MCF 10A (cell line): ENCODE measurements at regions of chr11 and their contacts with region 1.

Region 1: DNA sequence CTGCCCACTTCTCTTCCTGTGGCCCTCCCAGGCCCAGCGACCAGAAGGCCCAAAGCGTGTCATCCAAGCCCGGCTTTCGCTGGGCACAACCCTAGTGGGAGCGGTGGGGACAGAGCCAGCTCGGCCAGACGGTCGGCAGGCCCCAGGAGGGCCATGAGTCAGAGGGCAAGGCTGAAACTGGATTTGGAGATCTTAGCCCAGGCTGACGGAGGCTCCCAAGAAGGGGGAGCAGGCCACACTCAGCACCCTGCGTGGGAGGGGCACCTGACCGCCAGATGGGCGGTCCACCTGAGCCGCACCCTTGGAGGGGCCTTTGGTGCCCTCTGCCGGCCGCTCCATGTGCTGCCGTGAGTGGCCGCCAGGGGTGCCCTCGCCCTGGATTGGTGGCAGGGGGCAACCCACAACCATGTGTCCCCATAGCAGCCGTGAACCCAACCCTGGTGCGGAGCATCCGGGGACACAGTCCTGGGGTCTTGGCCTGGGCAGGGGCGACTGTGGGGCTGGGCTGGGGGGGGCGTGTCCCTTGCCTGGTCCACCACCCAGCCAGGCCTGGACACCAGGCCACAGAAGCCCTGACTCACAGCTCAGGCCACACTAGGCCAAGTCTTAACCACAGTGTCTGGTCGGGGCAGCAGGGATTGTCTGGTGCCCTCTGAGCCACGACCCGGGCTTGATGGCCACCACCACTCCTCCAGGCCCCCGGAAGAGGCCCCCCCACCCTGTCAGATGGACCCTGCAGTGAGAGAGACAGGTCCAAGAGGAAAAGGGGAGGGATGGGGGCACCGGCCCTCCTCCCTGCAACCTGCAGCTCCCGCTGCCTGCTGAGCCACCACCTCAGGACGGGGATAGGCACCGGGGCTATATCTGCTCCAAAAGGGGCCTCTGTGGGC is 19.2 kb upstream of the TALDO1 start:
- DNase-seq: peak; percentile 98
- H3K4me3 Mint-ChIP-seq: peak overlapping the region; percentile 23
- H3K27ac Mint-ChIP-seq: peak overlapping the region; percentile 43
- H3K4me1 Mint-ChIP-seq: peaks cover 12% of the 10 kb centered on the region
- H3K27me3 Mint-ChIP-seq: no peaks in the 10 kb centered on the region
- CTCF ChIP-seq: peak; percentile 98

Region 2: DNA sequence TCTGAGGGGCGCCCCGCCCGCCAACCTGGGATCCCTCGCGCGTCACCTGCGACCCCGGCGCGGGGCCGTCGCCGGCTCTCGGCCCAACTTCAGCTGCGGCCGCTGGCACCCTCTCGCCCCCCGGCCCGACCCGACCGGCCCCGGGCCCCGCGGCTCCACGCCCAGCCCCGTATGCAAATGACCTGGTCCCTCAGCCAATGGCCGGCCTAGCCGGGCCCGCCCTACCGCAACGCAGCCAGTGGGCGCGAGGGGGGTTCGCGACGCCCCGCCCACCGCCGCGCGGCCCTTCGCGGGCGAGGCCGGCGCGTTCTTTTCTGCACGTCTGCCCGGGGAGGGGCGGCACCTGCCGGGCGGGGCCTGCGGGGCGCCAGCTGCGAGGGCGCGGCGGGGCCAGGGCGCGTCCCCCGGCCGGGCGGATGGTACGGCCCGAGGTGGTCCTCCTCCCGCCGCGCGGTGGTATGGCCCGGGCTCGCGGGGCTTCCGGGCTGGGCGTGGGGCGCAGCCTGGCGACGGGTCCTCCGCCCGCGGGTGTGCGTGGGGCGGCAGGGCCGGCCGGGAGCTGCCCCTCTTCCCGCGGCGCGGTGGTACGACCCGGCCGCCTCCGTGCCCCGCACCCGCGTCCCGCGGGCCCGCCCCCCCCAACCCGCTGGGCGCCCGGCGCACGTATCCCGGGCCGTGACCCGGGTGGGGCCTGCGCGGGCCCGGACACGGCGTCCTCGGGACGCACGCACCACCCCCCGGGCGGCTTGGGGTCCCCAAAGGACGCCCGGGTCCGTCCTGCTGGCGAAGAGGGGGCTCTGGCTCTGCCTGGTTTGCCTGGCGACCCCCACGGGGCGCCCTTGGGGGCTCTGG is 159.6 kb before region 1 on chr11:
- CTCF ChIA-PET with region 1: no interaction called
- POLR2A ChIA-PET with region 1: no interaction called
- intact Hi-C with region 1: loop called (anchors 10 kb)
- DNase-seq: peak; percentile 91
- H3K4me3 Mint-ChIP-seq: peak overlapping the region; percentile 70
- H3K27ac Mint-ChIP-seq: no peak overlapping the region
- H3K4me1 Mint-ChIP-seq: no peaks in the 10 kb centered on the region
- H3K27me3 Mint-ChIP-seq: no peaks in the 10 kb centered on the region
- CTCF ChIP-seq: no peak

Region 3: GRCh38 chr11:662689-663274 is 65.3 kb before region 1 on chr11:
- CTCF ChIA-PET with region 1: interaction called, 4 read pairs
- POLR2A ChIA-PET with region 1: no interaction called
- intact Hi-C with region 1: loop called (anchors 1 kb)
- DNase-seq: peak; percentile 62
- H3K4me3 Mint-ChIP-seq: no peak overlapping the region
- H3K27ac Mint-ChIP-seq: no peak overlapping the region
- H3K4me1 Mint-ChIP-seq: no peaks in the 10 kb centered on the region
- H3K27me3 Mint-ChIP-seq: no peaks in the 10 kb centered on the region
- CTCF ChIP-seq: peak; percentile 81

Region 4: DNA sequence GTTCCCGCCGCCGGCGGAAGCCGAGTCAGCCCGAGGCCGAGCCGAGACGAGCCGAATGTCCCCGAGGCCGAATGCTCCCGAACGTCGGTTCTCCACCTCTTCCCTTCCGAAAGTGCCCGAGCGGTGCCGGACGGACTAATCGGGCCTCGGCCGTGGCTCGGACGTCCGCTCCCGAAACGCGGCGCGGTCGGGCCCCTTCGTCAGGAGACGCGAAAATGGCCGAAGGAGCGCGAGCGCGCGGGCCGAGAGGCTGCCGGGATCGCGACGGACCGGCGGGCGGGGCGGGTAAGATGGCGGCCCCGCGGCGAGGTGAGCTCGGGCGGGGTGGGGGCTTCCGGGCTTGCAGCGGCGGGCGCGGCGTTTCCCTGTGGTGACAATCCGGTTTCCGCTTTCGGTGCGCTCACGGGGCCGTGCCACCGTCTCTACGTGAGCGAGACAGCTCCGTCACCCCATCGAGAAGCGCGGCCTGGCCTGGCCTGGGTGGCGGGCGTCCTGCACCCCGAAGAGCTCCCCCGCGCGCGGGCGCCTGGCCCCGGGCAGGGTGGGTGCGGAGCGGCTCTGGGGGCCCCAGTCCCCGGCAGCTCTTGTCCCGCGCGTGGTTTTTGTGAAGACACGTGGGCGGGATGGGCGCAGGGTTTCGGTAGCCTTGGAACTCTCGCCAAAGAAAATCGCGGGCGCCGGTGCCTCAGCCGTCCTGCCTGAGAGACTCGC is 32.4 kb before region 1 on chr11 and contains the start of gene TMEM80:
- CTCF ChIA-PET with region 1: interaction called, 22 read pairs
- POLR2A ChIA-PET with region 1: interaction called, 96 read pairs
- intact Hi-C with region 1: loop called (anchors 1 kb)
- DNase-seq: peak; percentile 99
- H3K4me3 Mint-ChIP-seq: peak within 1 kb of the TSS; percentile 81
- H3K27ac Mint-ChIP-seq: peak within 1 kb of the TSS; percentile 98
- H3K4me1 Mint-ChIP-seq: peaks cover 33% of the 10 kb centered on the region
- H3K27me3 Mint-ChIP-seq: no peaks in the 10 kb centered on the region
- CTCF ChIP-seq: no peak
- total RNA-seq, gene TMEM80: 12.2 and 12.8 TPM in 2 replicates

Region 5: GRCh38 chr11:706957-707816 is 20.9 kb before region 1 on chr11:
- CTCF ChIA-PET with region 1: interaction called, 18 read pairs
- POLR2A ChIA-PET with region 1: interaction called, 57 read pairs
- intact Hi-C with region 1: no loop called
- DNase-seq: peak; percentile 53
- H3K4me3 Mint-ChIP-seq: peak overlapping the region; percentile 86
- H3K27ac Mint-ChIP-seq: peak overlapping the region; percentile 91
- H3K4me1 Mint-ChIP-seq: peaks cover 25% of the 10 kb centered on the region
- H3K27me3 Mint-ChIP-seq: no peaks in the 10 kb centered on the region
- CTCF ChIP-seq: no peak

Region 6: GRCh38 chr11:747158-748006 is 19.3 kb after region 1 on chr11 and contains the start of gene TALDO1:
- CTCF ChIA-PET with region 1: interaction called, 10 read pairs
- POLR2A ChIA-PET with region 1: interaction called, 40 read pairs
- intact Hi-C with region 1: loop called (anchors 2 kb)
- DNase-seq: peak; percentile 88
- H3K4me3 Mint-ChIP-seq: peak within 1 kb of the TSS; percentile 82
- H3K27ac Mint-ChIP-seq: peak within 1 kb of the TSS; percentile 63
- H3K4me1 Mint-ChIP-seq: peaks cover 4% of the 10 kb centered on the region
- H3K27me3 Mint-ChIP-seq: no peaks in the 10 kb centered on the region
- CTCF ChIP-seq: peak; percentile 15
- total RNA-seq, gene TALDO1: 93.8 and 137 TPM in 2 replicates

Region 7: DNA sequence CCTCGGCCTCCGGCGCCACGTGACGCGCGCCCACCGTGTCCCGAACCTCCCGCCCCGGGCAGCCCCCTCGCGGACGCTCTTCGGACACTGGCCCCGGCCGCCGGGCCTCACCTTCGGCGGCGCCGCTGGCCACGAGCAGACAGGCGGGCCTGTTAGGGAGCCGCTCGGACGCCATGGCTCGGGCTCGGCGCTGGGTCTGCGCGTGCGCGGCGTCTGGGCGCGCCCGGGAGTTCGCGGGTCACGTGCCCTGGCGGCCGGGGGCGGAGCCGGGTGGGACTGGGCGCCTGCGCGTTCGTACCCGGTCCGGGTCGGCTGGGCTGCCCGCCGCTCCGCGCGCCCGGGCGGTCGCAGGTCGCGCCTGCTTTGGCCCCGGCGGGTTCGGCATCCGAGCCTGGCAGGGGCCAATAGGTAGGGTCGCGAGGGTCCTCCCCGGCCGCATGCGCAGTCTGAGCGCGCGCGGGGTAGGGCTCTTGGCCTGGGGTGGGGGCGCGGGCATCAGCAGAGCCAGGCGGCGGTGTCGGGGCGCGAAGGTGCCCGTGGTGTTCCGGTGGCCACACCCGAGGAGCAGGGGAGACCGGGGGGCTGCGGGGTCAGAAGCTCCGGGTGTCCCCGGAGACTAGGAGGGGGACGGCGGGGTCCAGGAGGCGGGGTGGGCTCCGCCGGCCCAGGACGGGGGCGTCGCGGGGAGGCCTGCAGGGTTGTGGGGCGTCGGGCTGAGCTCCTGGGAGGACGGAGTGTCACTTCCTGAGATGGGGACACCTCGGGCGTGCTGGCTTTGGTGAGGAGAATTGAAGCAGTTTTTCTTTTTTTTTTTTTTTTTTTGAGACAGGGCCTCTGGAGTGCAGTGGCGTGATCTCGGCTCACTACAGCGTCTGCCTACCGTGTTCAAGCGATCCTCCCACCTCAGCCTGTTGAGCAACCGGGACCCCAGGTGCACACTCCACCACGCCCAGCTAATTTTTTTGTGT is 49.5 kb after region 1 on chr11 and contains the start of gene GATD1:
- CTCF ChIA-PET with region 1: no interaction called
- POLR2A ChIA-PET with region 1: interaction called, 16 read pairs
- intact Hi-C with region 1: no loop called
- DNase-seq: peak; percentile 84
- H3K4me3 Mint-ChIP-seq: peak within 1 kb of the TSS; percentile 85
- H3K27ac Mint-ChIP-seq: peak within 1 kb of the TSS; percentile 81
- H3K4me1 Mint-ChIP-seq: peaks cover 11% of the 10 kb centered on the region
- H3K27me3 Mint-ChIP-seq: no peaks in the 10 kb centered on the region
- CTCF ChIP-seq: no peak
- total RNA-seq, gene GATD1: 54.6 and 67.7 TPM in 2 replicates

Region 8: GRCh38 chr11:811446-812245 is 83.5 kb after region 1 on chr11:
- CTCF ChIA-PET with region 1: no interaction called
- POLR2A ChIA-PET with region 1: no interaction called
- intact Hi-C with region 1: no loop called
- DNase-seq: peak; percentile 51
- H3K4me3 Mint-ChIP-seq: peak overlapping the region; percentile 95
- H3K27ac Mint-ChIP-seq: no peak overlapping the region
- H3K4me1 Mint-ChIP-seq: peaks cover 12% of the 10 kb centered on the region
- H3K27me3 Mint-ChIP-seq: no peaks in the 10 kb centered on the region
- CTCF ChIP-seq: no peak